ENCODE measurements at regions of chr1 and their contacts with region 1.

Region 1: GRCh38 chr1:231337472-231338269 is at the start of gene EXOC8:
- DNase-seq: peak; percentile 94 to 98
- ATAC-seq: peak; percentile 88 to 91 (median 90)
- H3K4me3 ChIP-seq: peak within 1 kb of the TSS; percentile 95
- H3K27ac ChIP-seq: peak within 1 kb of the TSS; percentile 99
- H3K4me1 ChIP-seq: peaks cover 46% of the 10 kb centered on the region
- H3K27me3 ChIP-seq: no peaks in the 10 kb centered on the region
- CTCF ChIP-seq: no peak
- total RNA-seq, gene EXOC8: 13.7 to 39.9 (median 23.5) TPM

Region 2: DNA sequence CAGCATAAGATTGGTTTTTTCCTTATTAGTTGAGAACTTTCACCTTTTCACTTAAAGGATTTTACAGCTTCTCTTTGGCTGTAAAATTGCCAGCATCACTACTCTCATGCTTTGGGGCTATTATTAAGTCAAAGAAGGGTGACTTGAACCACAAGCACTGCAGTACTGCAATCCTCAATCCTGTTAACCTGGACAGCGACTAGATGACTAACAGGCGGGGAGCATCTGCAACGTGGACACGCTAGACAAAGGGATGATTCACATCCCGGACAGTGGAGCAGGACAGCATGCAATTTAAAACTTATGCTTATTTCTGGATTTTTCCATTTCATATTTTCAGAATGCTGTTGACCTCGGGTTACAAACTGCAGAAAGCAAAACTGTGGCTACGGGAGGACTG is 350.7 kb before region 1 on chr1:
- intact Hi-C with region 1: no loop called
- DNase-seq: no peak
- ATAC-seq: no peak
- H3K4me3 ChIP-seq: no peak overlapping the region
- H3K27ac ChIP-seq: no peak overlapping the region
- H3K4me1 ChIP-seq: no peaks in the 10 kb centered on the region
- H3K27me3 ChIP-seq: no peaks in the 10 kb centered on the region
- CTCF ChIP-seq: no peak

Region 3: DNA sequence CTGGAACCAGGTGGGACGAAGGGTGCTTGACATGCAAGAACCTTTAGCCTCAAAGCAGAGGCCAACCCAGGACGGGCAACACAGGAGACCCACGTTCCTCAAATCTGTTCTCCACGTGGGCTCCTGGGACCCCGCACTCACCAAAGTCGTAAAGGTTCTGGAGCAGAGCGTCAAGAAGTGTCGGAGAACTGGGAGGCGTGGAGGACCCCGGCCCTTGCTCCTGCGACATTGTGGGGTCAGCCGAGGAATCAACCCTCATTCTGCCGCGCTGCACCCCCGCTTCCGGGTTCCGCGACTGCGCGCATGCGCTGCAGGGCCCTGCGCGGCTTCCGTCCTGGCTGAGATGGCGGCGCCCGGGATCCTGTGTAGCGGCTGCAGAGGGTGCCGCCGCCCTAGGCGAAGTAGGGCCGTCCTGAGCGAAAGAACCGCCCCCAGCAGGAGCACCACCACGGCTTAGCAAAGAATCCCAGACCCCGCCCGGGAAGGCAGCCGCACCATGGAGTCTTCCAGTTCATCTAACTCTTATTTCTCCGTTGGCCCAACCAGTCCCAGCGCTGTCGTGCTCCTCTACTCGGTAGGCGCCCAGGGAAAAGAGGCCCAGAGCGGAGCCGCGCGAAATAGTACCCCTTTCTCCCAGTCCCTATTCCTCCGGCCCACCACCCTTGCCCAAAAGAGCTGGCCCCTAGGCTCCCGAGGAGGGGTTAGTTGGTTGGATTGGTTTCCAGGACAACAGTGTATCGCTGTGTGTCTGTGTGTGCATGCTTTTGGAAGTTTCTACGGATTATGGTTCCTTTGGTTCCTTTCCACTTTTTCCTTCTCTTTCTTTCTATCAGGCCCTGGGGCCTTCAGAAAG is 96.6 kb before region 1 on chr1 and contains the start of gene GNPAT:
- intact Hi-C with region 1: loop called (anchors 5 kb)
- DNase-seq: peak; percentile 90 to 95
- ATAC-seq: peak; percentile 91 to 93 (median 92)
- H3K4me3 ChIP-seq: peak within 1 kb of the TSS; percentile 88
- H3K27ac ChIP-seq: peak within 1 kb of the TSS; percentile 91
- H3K4me1 ChIP-seq: peaks cover 51% of the 10 kb centered on the region
- H3K27me3 ChIP-seq: no peaks in the 10 kb centered on the region
- CTCF ChIP-seq: no peak
- total RNA-seq, gene GNPAT: 65.8 to 77.6 (median 73.4) TPM

Region 4: DNA sequence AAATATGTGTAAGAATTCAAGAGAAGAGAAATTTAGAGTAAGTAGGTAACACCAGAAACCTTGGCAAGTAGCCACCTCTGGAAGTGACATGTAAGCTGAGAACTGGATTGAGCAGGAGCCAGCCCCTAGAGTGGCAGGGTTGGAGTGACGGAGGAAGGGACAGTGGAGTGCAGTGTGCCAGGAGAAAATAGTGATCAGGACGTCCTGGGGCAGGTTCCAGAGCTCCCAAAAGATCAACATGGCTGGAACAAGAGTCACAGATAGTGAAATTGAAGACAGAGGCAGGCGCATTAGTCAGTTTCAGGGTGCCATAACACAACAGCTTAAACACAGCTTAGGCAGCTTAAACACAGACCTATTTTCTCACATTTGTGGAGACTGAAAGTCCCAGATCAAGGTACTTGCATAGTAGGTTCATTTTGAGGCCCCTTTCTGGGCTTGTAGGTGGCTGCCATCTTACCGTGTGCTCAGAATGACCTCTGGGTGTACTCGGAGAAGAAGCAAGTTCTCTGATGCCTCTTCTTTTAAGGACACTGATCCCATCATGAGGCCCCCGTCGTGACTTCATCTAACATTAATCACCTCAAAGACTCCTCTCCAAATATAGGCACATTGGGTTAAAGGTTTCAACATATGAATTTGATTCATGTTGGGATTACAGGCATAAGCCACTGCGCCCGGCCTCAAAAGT is 59.4 kb before region 1 on chr1:
- intact Hi-C with region 1: loop called in 1 of 2 experiments (anchors 2 kb)
- DNase-seq: peak; percentile 61 to 89
- ATAC-seq: peak; percentile 94 to 97 (median 96)
- H3K4me3 ChIP-seq: no peak overlapping the region
- H3K27ac ChIP-seq: peak overlapping the region; percentile 78
- H3K4me1 ChIP-seq: peaks cover 15% of the 10 kb centered on the region
- H3K27me3 ChIP-seq: no peaks in the 10 kb centered on the region
- CTCF ChIP-seq: no peak

Region 5: GRCh38 chr1:231478800-231479199 is 141.1 kb after region 1 on chr1:
- intact Hi-C with region 1: no loop called
- DNase-seq: no peak
- ATAC-seq: no peak
- H3K4me3 ChIP-seq: no peak overlapping the region
- H3K27ac ChIP-seq: no peak overlapping the region
- H3K4me1 ChIP-seq: no peaks in the 10 kb centered on the region
- H3K27me3 ChIP-seq: no peaks in the 10 kb centered on the region
- CTCF ChIP-seq: no peak

Region 6: DNA sequence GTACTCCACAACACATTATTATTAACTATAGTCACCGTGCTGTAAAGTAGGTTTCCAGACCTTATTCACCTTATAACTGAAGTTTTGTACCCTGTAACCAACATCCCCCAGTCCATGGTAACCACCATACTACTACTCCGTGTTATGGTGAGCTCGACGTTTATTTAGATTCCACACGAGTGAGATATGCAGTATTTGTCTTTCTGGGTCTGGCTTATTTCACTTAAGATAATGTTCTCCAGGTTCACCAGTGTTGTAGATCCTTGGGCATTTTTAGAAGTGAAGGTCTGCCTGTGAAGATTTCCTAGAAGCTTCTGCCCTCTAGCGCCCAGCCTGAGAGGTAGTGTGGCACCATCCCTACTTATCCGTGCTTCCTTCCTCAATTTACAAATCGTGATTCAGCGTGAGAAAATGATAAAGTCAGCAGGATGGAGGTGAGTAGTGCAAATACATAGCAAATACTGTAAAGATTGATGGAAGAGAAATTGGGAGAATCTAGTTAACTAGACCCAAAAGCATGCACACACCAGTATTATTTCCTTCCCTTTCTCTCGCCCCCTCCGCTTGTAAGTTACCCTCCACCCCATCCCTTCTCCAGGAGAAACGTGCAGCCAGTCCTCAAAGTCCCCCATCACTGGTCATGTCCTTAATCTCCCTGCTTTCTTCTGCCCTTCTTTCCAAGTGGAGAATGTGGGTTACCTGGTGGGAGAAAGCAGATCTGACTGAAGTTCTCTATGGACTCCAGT is 253.0 kb after region 1 on chr1:
- intact Hi-C with region 1: loop called in 1 of 2 experiments (anchors 5 kb)
- DNase-seq: peak in 1 of 2 donors; percentile 36
- ATAC-seq: peak; percentile 83 to 93 (median 88)
- H3K4me3 ChIP-seq: no peak overlapping the region
- H3K27ac ChIP-seq: no peak overlapping the region
- H3K4me1 ChIP-seq: no peaks in the 10 kb centered on the region
- H3K27me3 ChIP-seq: no peaks in the 10 kb centered on the region
- CTCF ChIP-seq: peak; percentile 73